Sciatic nerve (tissue), 2 donors: ENCODE measurements at regions of chr4 and their contacts with region 1.

Region 1: DNA sequence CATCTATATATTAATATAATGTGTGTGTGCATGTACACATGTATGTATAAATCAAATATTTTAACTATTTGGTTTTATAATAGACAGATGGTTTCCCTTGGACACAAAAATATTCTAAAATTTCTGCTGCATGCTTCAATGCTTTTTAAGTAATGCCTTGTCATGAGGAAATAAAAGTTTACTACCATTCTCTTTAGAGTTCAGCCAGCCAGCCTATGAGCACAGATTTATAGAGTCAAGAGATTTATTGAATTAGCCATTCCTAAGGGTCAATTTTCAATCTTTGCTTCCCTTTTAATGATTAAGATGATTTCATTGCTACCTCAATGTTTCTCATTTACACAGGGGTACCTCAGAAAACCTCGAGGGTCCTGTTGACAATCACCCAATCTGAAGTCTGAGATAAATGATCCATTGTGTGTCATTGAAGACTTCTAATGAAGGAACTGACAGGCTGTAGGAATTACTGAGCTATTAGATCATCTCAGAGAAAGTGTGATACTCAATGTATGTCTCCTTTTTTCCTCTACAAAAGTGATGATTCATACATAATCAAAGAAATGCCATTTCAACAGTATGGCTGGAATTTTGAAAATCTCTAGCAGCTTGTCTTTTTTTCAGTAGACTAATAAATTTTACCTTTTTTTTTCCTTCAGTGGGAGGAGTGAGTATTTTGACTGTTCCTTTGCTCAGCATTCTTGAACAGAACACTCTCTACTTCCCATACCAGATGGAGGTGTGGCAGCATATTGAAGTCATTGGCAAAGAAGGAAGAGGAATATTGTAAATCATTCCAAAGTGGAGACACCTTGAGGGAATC is 222.6 kb upstream of the PCDH18 start:
- DNase-seq: no peak
- ATAC-seq: peak; percentile 81

Region 2: DNA sequence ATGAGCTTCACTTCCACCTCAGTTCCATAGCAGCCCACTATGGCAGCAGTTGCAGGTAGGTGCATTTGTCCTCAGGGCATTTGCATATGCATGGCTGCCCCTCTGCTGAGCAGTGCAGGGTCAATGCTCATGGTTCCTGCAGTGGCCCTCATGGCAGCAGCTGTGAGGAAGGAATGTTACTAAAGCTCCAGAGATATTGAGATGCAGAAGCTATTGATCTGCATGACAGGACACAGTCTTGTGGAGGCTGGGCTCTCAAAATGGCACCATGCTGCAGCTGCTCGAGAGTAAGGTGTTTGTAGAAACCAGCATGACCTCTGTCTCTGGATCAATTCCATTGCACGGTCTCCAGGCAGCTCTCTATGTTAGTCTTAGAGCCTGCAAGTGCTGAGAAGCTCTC is 43.4 kb before region 1 on chr4:
- intact Hi-C with region 1: loop called (anchors 2 kb)
- DNase-seq: no peak
- ATAC-seq: no peak